PC-9 (cell line): ENCODE measurements at regions of chr19 and their contacts with region 1.

Region 1: GRCh38 chr19:9075064-9075949 is 11.6 kb upstream of the OR1M1 start:
- DNase-seq: peak; percentile 97 to 99
- H3K4me3 ChIP-seq: no peak overlapping the region; the same call in 1 of the 2 replicates
- H3K27ac ChIP-seq: peak overlapping the region; percentile 84
- H3K4me1 ChIP-seq: peaks cover 23% of the 10 kb centered on the region
- H3K27me3 ChIP-seq: no peaks in the 10 kb centered on the region
- CTCF ChIP-seq: no peak

Region 2: GRCh38 chr19:8654591-8655339 is 420.5 kb before region 1 on chr19:
- CTCF ChIA-PET with region 1: interaction called, 3 read pairs
- POLR2A ChIA-PET with region 1: no interaction called
- intact Hi-C with region 1: loop called (anchors 1 kb)
- DNase-seq: peak in 1 of 2 experiments; percentile 46
- H3K4me3 ChIP-seq: peak overlapping the region; percentile 43; the same call in 1 of the 2 replicates
- H3K27ac ChIP-seq: no peak overlapping the region
- H3K4me1 ChIP-seq: no peaks in the 10 kb centered on the region
- H3K27me3 ChIP-seq: peaks cover 65% of the 10 kb centered on the region
- CTCF ChIP-seq: peak; percentile 99

Region 3: GRCh38 chr19:9009935-9010651 is 65.2 kb before region 1 on chr19 and contains the start of gene MUC16:
- CTCF ChIA-PET with region 1: no interaction called
- POLR2A ChIA-PET with region 1: interaction called, 3 read pairs
- intact Hi-C with region 1: loop called (anchors 1 kb)
- DNase-seq: peak; percentile 88 to 89
- H3K4me3 ChIP-seq: peak within 1 kb of the TSS; percentile 80
- H3K27ac ChIP-seq: peak within 1 kb of the TSS; percentile 67
- H3K4me1 ChIP-seq: peaks cover 33% of the 10 kb centered on the region
- H3K27me3 ChIP-seq: no peaks in the 10 kb centered on the region
- CTCF ChIP-seq: peak; percentile 3; the same call in 1 of the 2 replicates
- total RNA-seq, gene MUC16: 75.0 and 85.0 TPM in 2 replicates

Region 4: GRCh38 chr19:9032136-9032631 is 43.1 kb before region 1 on chr19:
- CTCF ChIA-PET with region 1: no interaction called
- POLR2A ChIA-PET with region 1: interaction called, 3 read pairs
- intact Hi-C with region 1: loop called (anchors 1 kb)
- DNase-seq: peak; percentile 81 to 100
- H3K4me3 ChIP-seq: no peak overlapping the region
- H3K27ac ChIP-seq: peak overlapping the region; percentile 52
- H3K4me1 ChIP-seq: peaks cover 27% of the 10 kb centered on the region
- H3K27me3 ChIP-seq: no peaks in the 10 kb centered on the region
- CTCF ChIP-seq: no peak

Region 5: GRCh38 chr19:9054765-9055164 is 20.5 kb before region 1 on chr19:
- CTCF ChIA-PET with region 1: interaction called, 4 read pairs
- POLR2A ChIA-PET with region 1: interaction called, 37 read pairs
- intact Hi-C with region 1: loop called (anchors 1 kb)
- DNase-seq: peak; percentile 90 to 98
- H3K4me3 ChIP-seq: peak overlapping the region; percentile 35; the same call in 1 of the 2 replicates
- H3K27ac ChIP-seq: peak overlapping the region; percentile 92
- H3K4me1 ChIP-seq: peaks cover 73% of the 10 kb centered on the region
- H3K27me3 ChIP-seq: no peaks in the 10 kb centered on the region
- CTCF ChIP-seq: no peak